ENCODE measurements at regions of chr15 and their contacts with region 1.

Region 1: GRCh38 chr15:74540761-74541493 is at the start of gene ARID3B:
- DNase-seq: peak; percentile 89 to 97 (median 95)
- H3K4me3 ChIP-seq: peak within 1 kb of the TSS; percentile 89
- H3K4me3 Mint-ChIP-seq: peak within 1 kb of the TSS; percentile 92 to 98 (median 95)
- H3K27ac ChIP-seq: peak within 1 kb of the TSS; percentile 83
- H3K27ac Mint-ChIP-seq: peak within 1 kb of the TSS; percentile 87 to 98 (median 96)
- H3K4me1 ChIP-seq: peaks cover 46% of the 10 kb centered on the region
- H3K4me1 Mint-ChIP-seq: peaks cover 54 to 58% (median 57%) of the 10 kb centered on the region in 3 donors
- H3K27me3 ChIP-seq: no peaks in the 10 kb centered on the region
- H3K27me3 Mint-ChIP-seq: no peaks in the 10 kb centered on the region
- total RNA-seq, gene ARID3B: 30.1 to 31.1 TPM

Region 2: GRCh38 chr15:74392451-74392830 is 148.5 kb before region 1 on chr15:
- CTCF ChIA-PET with region 1: no interaction called
- POLR2A ChIA-PET with region 1: no interaction called
- DNase-seq: no peak
- H3K4me3 ChIP-seq: no peak overlapping the region
- H3K4me3 Mint-ChIP-seq: no peak overlapping the region
- H3K27ac ChIP-seq: peak overlapping the region; percentile 81
- H3K27ac Mint-ChIP-seq: peak overlapping the region in 1 of 8 donors; percentile 68
- H3K4me1 ChIP-seq: peaks cover 6% of the 10 kb centered on the region
- H3K4me1 Mint-ChIP-seq: peaks cover 16 to 48% (median 21%) of the 10 kb centered on the region in 3 donors
- H3K27me3 ChIP-seq: no peaks in the 10 kb centered on the region
- H3K27me3 Mint-ChIP-seq: peaks cover 0 to 3% of the 10 kb centered on the region in 2 donors

Region 3: DNA sequence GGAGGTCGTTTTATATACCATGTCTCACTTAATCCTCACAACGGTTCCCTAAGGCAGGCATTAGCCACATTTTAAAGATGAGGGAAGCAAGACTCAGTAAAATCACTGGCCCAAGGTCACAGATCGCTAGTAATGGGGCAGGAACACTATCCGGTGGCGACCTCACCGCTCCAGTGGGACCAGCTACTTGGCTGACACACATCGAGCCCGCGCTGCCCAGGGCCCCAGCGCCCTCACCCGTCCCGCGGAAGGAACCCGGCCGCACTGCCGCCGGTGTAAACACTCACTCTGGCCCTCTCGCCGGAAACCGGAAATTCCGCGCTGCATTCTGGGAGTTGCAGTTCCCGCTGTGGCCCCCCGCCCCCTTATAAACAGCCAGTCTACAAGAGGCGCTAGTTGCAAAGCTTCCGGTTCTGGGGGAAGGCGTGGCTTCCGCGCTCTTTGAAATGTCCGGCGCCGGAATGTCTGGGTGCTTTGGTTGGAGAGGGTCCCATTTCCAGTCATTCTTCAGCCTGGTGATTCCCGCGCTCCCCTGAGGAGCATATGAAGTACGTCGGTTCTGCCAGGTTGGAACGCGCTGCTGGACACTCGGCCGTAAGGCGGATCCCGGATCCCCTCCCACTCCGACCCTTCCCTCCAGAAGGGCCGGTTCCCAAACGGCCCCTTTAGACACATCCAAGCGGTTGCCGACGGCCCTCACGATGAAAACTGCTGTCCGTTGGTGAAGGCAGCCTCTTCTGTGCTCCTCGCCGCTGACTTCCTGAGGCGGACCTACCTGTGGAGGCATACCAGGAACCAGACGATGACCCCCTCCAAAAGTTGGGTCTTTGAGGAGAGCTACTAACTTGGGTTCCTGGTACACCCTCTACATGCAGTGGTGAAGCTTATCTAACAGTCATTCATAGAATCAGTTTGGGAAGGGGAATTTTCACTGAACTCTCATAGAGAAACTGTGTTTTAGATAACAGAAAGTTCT is 79.8 kb before region 1 on chr15 and contains the start of gene UBL7:
- CTCF ChIA-PET with region 1: no interaction called
- POLR2A ChIA-PET with region 1: interaction called, 10 read pairs
- DNase-seq: peak; percentile 88 to 96 (median 94)
- H3K4me3 ChIP-seq: peak within 1 kb of the TSS; percentile 87
- H3K4me3 Mint-ChIP-seq: peak within 1 kb of the TSS; percentile 91 to 96 (median 94)
- H3K27ac ChIP-seq: peak within 1 kb of the TSS; percentile 81
- H3K27ac Mint-ChIP-seq: peak within 1 kb of the TSS; percentile 76 to 98 (median 88)
- H3K4me1 ChIP-seq: peaks cover 17% of the 10 kb centered on the region
- H3K4me1 Mint-ChIP-seq: peaks cover 42 to 69% (median 62%) of the 10 kb centered on the region in 3 donors
- H3K27me3 ChIP-seq: no peaks in the 10 kb centered on the region
- H3K27me3 Mint-ChIP-seq: no peaks in the 10 kb centered on the region
- total RNA-seq, gene UBL7: 64.9 to 67.7 TPM

Region 4: DNA sequence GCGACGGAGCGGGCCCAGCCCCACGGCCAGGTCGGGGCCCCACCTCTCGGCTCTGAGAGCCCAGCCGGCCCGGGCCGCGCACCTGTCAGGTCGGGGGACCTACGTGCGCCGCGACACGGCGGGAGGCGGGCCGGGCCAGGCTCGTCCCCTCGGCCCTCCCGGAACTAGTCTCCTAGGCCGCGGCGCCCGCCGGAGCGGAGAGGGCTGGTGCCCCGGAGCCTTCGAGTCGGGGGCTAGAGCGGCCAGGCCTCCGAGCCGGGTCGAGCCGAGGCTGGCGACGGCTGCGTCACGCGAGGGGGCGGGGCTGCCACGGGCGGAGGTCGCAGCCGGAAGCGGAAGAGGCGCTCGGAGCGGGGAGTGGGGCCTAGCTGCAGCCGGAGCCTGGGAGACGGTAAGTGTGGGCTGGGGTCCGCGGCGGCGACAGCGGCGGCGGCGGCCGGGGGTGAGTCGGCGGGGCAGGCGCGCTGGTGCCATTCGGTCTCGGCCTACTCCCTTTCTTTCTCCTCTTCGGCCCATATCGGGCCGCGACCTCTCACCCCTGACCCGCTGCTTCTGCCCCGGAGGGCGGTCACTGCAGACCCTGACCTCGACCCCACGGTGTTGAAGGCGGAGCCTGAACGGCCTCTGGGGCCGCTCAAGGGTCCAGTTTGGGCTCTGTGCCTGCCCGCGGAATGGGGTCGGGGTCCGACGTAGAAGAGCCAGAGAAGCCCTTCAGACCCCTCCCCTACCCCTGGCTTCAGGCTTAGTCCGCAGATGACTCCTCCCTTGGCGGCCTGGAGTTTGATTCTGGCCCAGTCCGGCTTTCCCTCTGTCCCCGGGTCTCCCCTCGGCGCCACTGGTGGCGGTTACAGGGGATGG is 74.8 kb after region 1 on chr15 and contains the start of gene CLK3:
- CTCF ChIA-PET with region 1: interaction called, 6 read pairs
- POLR2A ChIA-PET with region 1: interaction called, 18 read pairs
- DNase-seq: peak; percentile 91 to 96 (median 95)
- H3K4me3 ChIP-seq: peak within 1 kb of the TSS; percentile 95
- H3K4me3 Mint-ChIP-seq: peak within 1 kb of the TSS; percentile 93 to 98 (median 94)
- H3K27ac ChIP-seq: peak within 1 kb of the TSS; percentile 97
- H3K27ac Mint-ChIP-seq: peak within 1 kb of the TSS; percentile 97 to 99 (median 98)
- H3K4me1 ChIP-seq: peaks cover 35% of the 10 kb centered on the region
- H3K4me1 Mint-ChIP-seq: peaks cover 38 to 53% (median 41%) of the 10 kb centered on the region in 3 donors
- H3K27me3 ChIP-seq: no peaks in the 10 kb centered on the region
- H3K27me3 Mint-ChIP-seq: no peaks in the 10 kb centered on the region
- total RNA-seq, gene CLK3: 96.8 to 101 TPM

Measured in CD8-positive, alpha-beta memory T cell (primary cell).